ENCODE measurements at regions of chr2 and their contacts with region 1.

Region 1: GRCh38 chr2:120075545-120075944 is 62.7 kb downstream of the EPB41L5 start:
- DNase-seq: no peak
- H3K4me3 ChIP-seq: no peak overlapping the region
- H3K27ac ChIP-seq: no peak overlapping the region
- H3K27me3 ChIP-seq: no peaks in the 10 kb centered on the region
- CTCF ChIP-seq: no peak

Region 2: DNA sequence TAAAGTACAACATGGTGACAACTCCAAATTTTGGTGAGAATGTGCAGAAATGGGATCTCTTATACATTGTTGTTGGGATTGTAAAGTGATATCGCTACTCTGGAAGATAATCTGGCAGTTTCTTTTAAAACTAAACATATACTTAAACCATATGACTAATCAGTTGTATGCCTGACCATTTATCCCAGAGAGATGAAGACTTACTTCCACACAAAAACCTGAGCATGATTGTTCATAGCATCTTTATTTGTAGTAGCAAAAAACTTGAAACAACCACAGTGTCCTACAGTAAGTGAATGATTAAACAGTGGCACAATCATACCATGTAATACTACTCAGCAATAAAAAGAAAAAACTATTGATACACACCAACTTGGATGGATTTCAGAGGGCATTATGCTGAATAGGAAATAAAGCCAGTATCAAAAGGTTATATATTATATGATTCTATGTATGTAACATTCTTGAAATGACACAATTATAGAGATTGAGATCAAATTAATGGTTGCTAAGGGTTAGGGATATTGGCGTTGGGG is 15.4 kb before region 1 on chr2:
- CTCF ChIA-PET with region 1: no interaction called
- POLR2A ChIA-PET with region 1: interaction called, 15 read pairs
- DNase-seq: no peak
- H3K4me3 ChIP-seq: no peak overlapping the region
- H3K27ac ChIP-seq: no peak overlapping the region
- H3K27me3 ChIP-seq: no peaks in the 10 kb centered on the region
- CTCF ChIP-seq: no peak